CD8-positive, alpha-beta T cell (primary cell): ENCODE measurements at regions of chr9 and their contacts with region 1.

Region 1: DNA sequence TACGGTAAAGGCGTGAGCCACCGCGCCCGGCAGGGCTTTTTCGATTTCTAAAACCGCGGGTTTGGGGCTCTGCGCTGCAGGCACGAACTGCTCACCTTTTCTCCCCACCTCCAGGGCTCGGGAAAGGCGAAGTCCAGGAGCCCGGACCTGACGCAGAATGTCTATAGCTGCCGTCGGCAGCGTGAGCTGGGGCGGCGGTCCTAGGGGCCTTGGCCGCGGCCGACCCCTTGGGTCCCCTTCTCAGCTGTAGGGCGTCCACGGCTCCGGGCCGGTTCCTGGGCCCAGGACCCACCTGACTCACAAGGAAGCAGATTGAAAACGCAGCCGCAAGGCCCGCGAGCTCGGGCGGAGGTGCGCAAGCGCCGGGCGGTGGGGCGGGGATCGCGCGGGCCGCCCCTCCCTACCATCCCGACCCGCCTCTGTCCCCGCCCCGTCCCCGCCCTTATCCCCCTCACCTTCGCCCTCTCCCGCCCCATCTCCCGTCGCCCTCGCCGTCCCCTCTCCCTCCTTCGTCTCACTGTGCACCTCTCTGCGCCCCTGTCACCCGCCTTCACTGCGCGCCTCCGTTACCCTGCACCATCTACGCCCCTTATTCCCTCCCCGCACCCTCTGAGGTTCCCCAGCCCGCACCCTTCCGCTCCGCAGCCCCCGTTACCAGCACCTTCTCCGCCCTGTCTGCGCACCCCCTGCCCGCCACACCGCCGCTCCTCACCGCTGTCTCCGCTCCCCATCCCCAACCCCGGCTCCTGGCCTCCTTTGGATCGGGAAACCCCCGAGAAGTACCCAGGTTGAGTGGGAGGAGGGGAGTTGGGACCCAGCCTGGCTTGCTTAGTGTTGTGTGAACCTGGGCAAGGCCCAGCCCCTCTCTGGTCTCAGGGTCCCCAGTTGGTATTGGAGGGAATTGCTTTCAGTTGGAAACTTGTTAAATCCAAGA is at the start of gene HDHD3:
- DNase-seq: peak; percentile 40 to 91 (median 76)
- ATAC-seq: peak; percentile 90
- H3K4me3 ChIP-seq: peak within 1 kb of the TSS; percentile 88 to 94
- H3K4me3 Mint-ChIP-seq: peak within 1 kb of the TSS; percentile 86
- H3K27ac ChIP-seq: peak within 1 kb of the TSS; percentile 69
- H3K27ac Mint-ChIP-seq: peak within 1 kb of the TSS; percentile 84
- H3K4me1 ChIP-seq: peaks cover 8% of the 10 kb centered on the region
- H3K4me1 Mint-ChIP-seq: peaks cover 13% of the 10 kb centered on the region
- H3K27me3 ChIP-seq: no peaks in the 10 kb centered on the region
- H3K27me3 Mint-ChIP-seq: no peaks in the 10 kb centered on the region
- CTCF ChIP-seq: no peak
- total RNA-seq, gene HDHD3: 10.2 to 11.0 TPM

Region 2: DNA sequence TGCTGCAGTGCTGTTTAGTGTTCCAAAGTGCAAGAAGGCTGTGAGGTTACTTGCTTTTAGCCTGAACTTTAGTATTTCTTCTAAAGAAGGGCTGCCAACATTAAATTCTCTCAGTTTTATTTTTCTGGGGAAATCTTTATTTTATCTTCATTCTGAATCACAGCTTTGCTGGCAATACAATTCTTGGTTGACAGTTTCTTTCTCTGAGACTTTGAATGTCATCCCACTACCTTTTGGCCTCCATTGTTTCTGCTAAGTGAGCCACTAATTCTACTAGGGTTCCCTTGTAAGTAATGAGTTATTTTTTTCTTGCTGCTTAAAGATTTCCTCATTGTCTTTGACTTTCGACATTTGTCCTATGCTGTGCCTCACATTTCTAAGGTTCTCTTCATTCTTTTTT is 1169.5 kb before region 1 on chr9:
- CTCF ChIA-PET with region 1: no interaction called
- POLR2A ChIA-PET with region 1: no interaction called
- intact Hi-C with region 1: no loop called
- DNase-seq: no peak
- ATAC-seq: no peak
- H3K4me3 ChIP-seq: no peak overlapping the region
- H3K4me3 Mint-ChIP-seq: no peak overlapping the region
- H3K27ac ChIP-seq: no peak overlapping the region
- H3K27ac Mint-ChIP-seq: no peak overlapping the region
- H3K4me1 ChIP-seq: no peaks in the 10 kb centered on the region
- H3K4me1 Mint-ChIP-seq: no peaks in the 10 kb centered on the region
- H3K27me3 ChIP-seq: no peaks in the 10 kb centered on the region
- H3K27me3 Mint-ChIP-seq: no peaks in the 10 kb centered on the region
- CTCF ChIP-seq: no peak

Region 3: GRCh38 chr9:113340017-113340699 is 36.7 kb before region 1 on chr9 and contains the start of gene WDR31:
- CTCF ChIA-PET with region 1: no interaction called
- POLR2A ChIA-PET with region 1: no interaction called
- intact Hi-C with region 1: loop called (anchors 1 to 2 kb)
- DNase-seq: peak; percentile 58 to 90 (median 78)
- ATAC-seq: peak; percentile 99
- H3K4me3 ChIP-seq: peak within 1 kb of the TSS; percentile 70 to 83
- H3K4me3 Mint-ChIP-seq: peak within 1 kb of the TSS; percentile 83
- H3K27ac ChIP-seq: peak within 1 kb of the TSS in 1 of 2 experiments; percentile 46
- H3K27ac Mint-ChIP-seq: no peak within 1 kb of the TSS
- H3K4me1 ChIP-seq: peaks cover 19% of the 10 kb centered on the region
- H3K4me1 Mint-ChIP-seq: peaks cover 24% of the 10 kb centered on the region
- H3K27me3 ChIP-seq: peaks cover 0 to 3% of the 10 kb centered on the region in 2 experiments
- H3K27me3 Mint-ChIP-seq: peaks cover 2% of the 10 kb centered on the region
- CTCF ChIP-seq: no peak
- total RNA-seq, gene WDR31: 0.11 to 0.43 TPM

Region 4: DNA sequence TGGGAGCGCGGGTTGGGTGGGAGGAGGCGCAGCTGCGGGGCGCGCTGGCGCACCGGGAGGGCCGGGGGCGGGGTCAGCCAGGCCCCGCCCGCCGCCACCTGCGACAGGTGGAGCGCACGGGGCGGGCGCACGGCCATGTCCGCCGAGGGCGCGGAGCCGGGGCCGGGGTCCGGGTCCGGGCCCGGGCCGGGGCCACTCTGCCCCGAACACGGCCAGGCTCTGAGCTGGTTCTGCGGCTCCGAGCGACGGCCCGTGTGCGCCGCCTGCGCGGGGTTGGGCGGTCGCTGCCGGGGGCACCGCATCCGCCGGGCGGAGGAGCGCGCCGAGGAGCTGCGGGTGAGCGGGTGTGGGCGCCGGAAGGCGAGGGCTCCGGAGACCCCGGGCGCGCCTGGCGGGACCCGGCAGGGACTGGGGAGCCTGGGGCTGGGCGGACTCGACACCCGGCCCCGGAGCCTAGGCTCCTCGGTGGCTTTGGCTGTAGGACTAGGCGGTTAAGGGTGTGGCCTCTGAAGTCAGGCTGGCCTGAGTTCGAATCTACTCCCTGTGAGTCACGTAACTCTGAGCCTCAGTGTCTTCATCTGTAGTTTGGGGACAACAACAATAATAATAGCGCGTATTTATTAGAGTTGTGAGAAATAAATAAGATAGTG is 27.3 kb before region 1 on chr9 and contains the start of gene BSPRY:
- CTCF ChIA-PET with region 1: no interaction called
- POLR2A ChIA-PET with region 1: no interaction called
- intact Hi-C with region 1: loop called in 1 of 2 experiments (anchors 1 kb)
- DNase-seq: peak in 6 of 9 experiments; percentile 26 to 61 (median 46)
- ATAC-seq: peak; percentile 72
- H3K4me3 ChIP-seq: peak within 1 kb of the TSS; percentile 22 to 36
- H3K4me3 Mint-ChIP-seq: peak within 1 kb of the TSS; percentile 78
- H3K27ac ChIP-seq: no peak within 1 kb of the TSS
- H3K27ac Mint-ChIP-seq: no peak within 1 kb of the TSS
- H3K4me1 ChIP-seq: peaks cover 17% of the 10 kb centered on the region
- H3K4me1 Mint-ChIP-seq: peaks cover 20% of the 10 kb centered on the region
- H3K27me3 ChIP-seq: no peaks in the 10 kb centered on the region
- H3K27me3 Mint-ChIP-seq: peaks cover 31% of the 10 kb centered on the region
- CTCF ChIP-seq: no peak
- total RNA-seq, gene BSPRY: not detected

Region 5: DNA sequence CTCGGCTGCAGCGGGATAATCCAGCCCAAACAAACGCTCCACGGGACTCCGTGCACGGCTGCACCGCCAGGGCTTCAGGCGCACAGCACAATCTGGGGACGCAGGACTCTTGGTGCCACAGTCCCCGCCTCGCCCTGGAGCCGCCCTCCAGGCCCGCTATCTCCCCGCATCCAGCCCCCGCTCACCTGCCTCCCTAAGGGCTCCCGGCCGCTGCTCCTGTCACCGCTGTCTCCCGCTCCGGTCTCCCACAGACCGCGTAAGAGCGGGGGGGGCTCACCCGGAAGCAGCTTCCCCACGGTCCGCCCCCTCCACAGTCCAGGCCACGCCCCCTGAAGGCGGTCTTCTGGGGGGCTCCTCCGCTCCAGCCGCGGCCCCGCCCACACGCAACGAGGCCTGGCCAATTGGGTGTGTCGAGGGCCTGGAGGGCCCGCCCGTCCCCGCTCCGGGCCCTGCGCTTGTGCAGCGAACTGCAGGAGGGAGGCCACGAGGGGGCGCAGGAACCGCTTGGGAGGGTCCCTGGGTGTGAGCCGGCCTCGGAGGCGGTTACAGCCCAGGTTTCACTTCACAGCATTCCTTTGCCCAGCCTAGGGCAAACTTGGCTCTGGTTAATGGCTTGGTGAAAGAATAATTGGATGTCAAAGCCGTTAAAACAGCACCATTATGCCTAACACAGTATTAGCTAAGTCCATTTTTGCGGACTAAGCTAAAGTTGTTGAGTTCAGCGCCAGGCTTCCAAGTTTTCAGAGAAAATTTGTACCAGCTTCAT is 24.3 kb after region 1 on chr9 and contains the start of gene ALAD:
- CTCF ChIA-PET with region 1: interaction called, 5 read pairs
- POLR2A ChIA-PET with region 1: no interaction called
- intact Hi-C with region 1: loop called (anchors 1 kb)
- DNase-seq: peak; percentile 98 to 100 (median 100)
- ATAC-seq: peak; percentile 99
- H3K4me3 ChIP-seq: peak within 1 kb of the TSS; percentile 80 to 81
- H3K4me3 Mint-ChIP-seq: peak within 1 kb of the TSS; percentile 97
- H3K27ac ChIP-seq: peak within 1 kb of the TSS; percentile 53
- H3K27ac Mint-ChIP-seq: peak within 1 kb of the TSS; percentile 92
- H3K4me1 ChIP-seq: peaks cover 16% of the 10 kb centered on the region
- H3K4me1 Mint-ChIP-seq: peaks cover 28% of the 10 kb centered on the region
- H3K27me3 ChIP-seq: no peaks in the 10 kb centered on the region
- H3K27me3 Mint-ChIP-seq: no peaks in the 10 kb centered on the region
- CTCF ChIP-seq: peak; percentile 94
- total RNA-seq, gene ALAD: 11.2 to 11.5 TPM